K562 (cell line): ENCODE measurements at regions of chr1 and their contacts with region 1.

Region 1: GRCh38 chr1:161177112-161177935 is at the start of gene B4GALT3:
- DNase-seq: peak; percentile 91 to 98 (median 98)
- ATAC-seq: peak; percentile 94
- H3K4me3 ChIP-seq: peak within 1 kb of the TSS; percentile 90
- H3K27ac ChIP-seq: peak within 1 kb of the TSS; percentile 96
- H3K4me1 ChIP-seq: peaks cover 25 to 42% of the 10 kb centered on the region in 2 experiments; a peak in 4 of 5 replicates
- H3K27me3 ChIP-seq: no peaks in the 10 kb centered on the region
- CTCF ChIP-seq: peak; percentile 81 to 87 (median 82)
- EP300 ChIP-seq: peak; percentile 61
- POLR2A ChIP-seq: peak; percentile 95
- RAD21 ChIP-seq: peak; percentile 87 to 88
- polyA plus RNA-seq, gene B4GALT3: 46.1 to 103 TPM

Region 2: DNA sequence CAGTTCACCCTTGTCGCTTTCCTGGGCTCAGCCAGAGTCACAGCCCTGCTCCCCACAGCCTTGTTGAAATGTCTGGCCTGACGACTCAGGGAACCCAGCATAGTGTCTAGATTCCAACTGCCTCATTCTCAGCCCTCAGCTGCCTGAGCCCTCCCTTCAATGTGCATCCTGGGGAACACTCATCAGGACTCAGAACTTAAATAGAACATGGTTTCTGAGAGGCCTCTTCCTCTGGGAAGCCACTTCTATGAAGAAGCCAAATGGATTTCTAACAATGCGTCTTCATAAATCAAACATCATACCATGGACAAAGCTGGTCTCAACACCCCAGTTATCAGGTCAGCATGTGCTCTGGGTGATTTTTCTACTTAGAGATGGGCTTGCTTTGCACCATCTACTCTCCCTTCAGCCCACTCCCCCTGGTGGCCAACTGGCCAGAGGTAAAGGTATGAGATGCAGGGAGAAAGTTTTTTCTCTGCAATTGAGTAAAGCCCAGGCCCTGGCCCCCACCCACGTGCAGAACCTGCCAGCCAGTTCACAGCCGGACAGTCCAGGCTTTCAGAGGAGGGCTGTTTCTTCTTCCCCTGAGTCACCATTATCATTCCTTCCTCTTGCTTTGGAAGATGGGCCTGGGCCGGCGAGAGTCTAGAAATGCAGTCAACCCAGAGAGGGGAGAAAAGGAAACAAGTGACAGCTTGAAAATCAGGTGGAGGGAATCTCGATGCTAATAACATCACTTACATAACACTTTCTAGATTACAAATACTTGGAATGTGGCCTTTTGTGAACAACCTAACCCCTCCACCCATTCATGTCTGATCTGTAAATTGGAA is 346.8 kb before region 1 on chr1:
- CTCF ChIA-PET with region 1: no interaction called
- POLR2A ChIA-PET with region 1: no interaction called
- in situ Hi-C with region 1: no loop called
- intact Hi-C with region 1: loop called (anchors 10 kb)
- DNase-seq: peak; percentile 45 to 72 (median 62)
- ATAC-seq: peak; percentile 95
- H3K4me3 ChIP-seq: no peak overlapping the region
- H3K27ac ChIP-seq: no peak overlapping the region
- H3K4me1 ChIP-seq: no peaks in the 10 kb centered on the region
- H3K27me3 ChIP-seq: peaks cover 0 to 12% of the 10 kb centered on the region in 2 experiments; a peak in 2 of 5 replicates
- CTCF ChIP-seq: peak; percentile 76 to 81 (median 81)
- EP300 ChIP-seq: no peak
- POLR2A ChIP-seq: no peak
- RAD21 ChIP-seq: peak; percentile 73 to 74

Region 3: GRCh38 chr1:161071886-161072371 is 105.4 kb before region 1 on chr1:
- CTCF ChIA-PET with region 1: interaction called, 4 read pairs
- POLR2A ChIA-PET with region 1: no interaction called
- in situ Hi-C with region 1: no loop called
- intact Hi-C with region 1: loop called (anchors 1 kb)
- DNase-seq: peak; percentile 77 to 80 (median 78)
- ATAC-seq: peak; percentile 90
- H3K4me3 ChIP-seq: no peak overlapping the region
- H3K27ac ChIP-seq: no peak overlapping the region
- H3K4me1 ChIP-seq: peaks cover 22 to 23% of the 10 kb centered on the region in 2 experiments
- H3K27me3 ChIP-seq: no peaks in the 10 kb centered on the region
- CTCF ChIP-seq: peak; percentile 86 to 91 (median 90)
- EP300 ChIP-seq: no peak
- POLR2A ChIP-seq: no peak
- RAD21 ChIP-seq: peak; percentile 75 to 88

Region 4: DNA sequence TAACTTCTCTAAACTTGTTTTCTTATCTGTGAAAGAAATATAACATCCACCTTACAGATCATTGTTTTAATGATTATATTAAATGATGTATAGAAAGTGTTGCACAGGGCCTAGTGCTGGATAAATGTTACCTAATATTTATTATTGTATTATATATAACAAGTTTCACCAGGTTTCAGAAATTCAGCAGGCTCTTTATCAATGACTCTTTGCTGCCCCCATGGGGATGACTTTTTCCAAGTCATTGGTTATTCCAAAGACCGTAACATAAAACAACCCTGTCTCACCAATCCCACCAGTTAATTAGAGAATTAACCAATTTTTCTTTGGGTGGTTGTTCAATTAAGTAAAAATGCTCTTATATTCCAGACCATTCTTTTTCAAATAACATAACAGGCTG is 37.6 kb before region 1 on chr1:
- CTCF ChIA-PET with region 1: no interaction called
- POLR2A ChIA-PET with region 1: interaction called, 4 read pairs
- in situ Hi-C with region 1: no loop called
- intact Hi-C with region 1: loop called (anchors 1 kb)
- DNase-seq: peak in 3 of 4 experiments; percentile 43 to 68 (median 60)
- ATAC-seq: peak; percentile 88
- H3K4me3 ChIP-seq: no peak overlapping the region
- H3K27ac ChIP-seq: no peak overlapping the region
- H3K4me1 ChIP-seq: peaks cover 0 to 4% of the 10 kb centered on the region in 2 experiments; a peak in 3 of 5 replicates
- H3K27me3 ChIP-seq: no peaks in the 10 kb centered on the region
- CTCF ChIP-seq: peak; percentile 55 to 85 (median 59); a peak in 5 of 6 replicates
- EP300 ChIP-seq: no peak
- POLR2A ChIP-seq: no peak
- RAD21 ChIP-seq: peak; percentile 65 to 75

Region 5: GRCh38 chr1:161159087-161159912 is 18.0 kb before region 1 on chr1 and contains the start of gene USP21:
- CTCF ChIA-PET with region 1: no interaction called
- POLR2A ChIA-PET with region 1: interaction called, 4 read pairs
- in situ Hi-C with region 1: no loop called
- intact Hi-C with region 1: loop called (anchors 2 kb)
- DNase-seq: peak; percentile 94 to 96 (median 94)
- ATAC-seq: peak; percentile 91
- H3K4me3 ChIP-seq: peak within 1 kb of the TSS; percentile 75
- H3K27ac ChIP-seq: peak within 1 kb of the TSS; percentile 72
- H3K4me1 ChIP-seq: peaks cover 50 to 62% of the 10 kb centered on the region in 2 experiments
- H3K27me3 ChIP-seq: no peaks in the 10 kb centered on the region
- CTCF ChIP-seq: peak; percentile 25 to 62 (median 29); a peak in 5 of 6 replicates
- EP300 ChIP-seq: 0 out of 2 replicates have a peak, but pooled peaks have one; percentile 17
- POLR2A ChIP-seq: peak; percentile 80
- RAD21 ChIP-seq: no peak
- polyA plus RNA-seq, gene USP21: 14.7 to 14.8 TPM

Region 6: GRCh38 chr1:161165742-161166668 is 11.3 kb before region 1 on chr1 and contains the start of gene PPOX:
- CTCF ChIA-PET with region 1: no interaction called
- POLR2A ChIA-PET with region 1: interaction called, 33 read pairs
- in situ Hi-C with region 1: no loop called
- intact Hi-C with region 1: loop called (anchors 1 kb)
- DNase-seq: peak; percentile 91 to 99 (median 93)
- ATAC-seq: peak; percentile 93
- H3K4me3 ChIP-seq: peak within 1 kb of the TSS; percentile 55
- H3K27ac ChIP-seq: peak within 1 kb of the TSS; percentile 83
- H3K4me1 ChIP-seq: peaks cover 54 to 70% of the 10 kb centered on the region in 2 experiments
- H3K27me3 ChIP-seq: no peaks in the 10 kb centered on the region
- CTCF ChIP-seq: peak; percentile 69 to 85 (median 72)
- EP300 ChIP-seq: peak; percentile 98
- POLR2A ChIP-seq: peak; percentile 96
- RAD21 ChIP-seq: peak in 1 of 2 experiments; percentile 22; a peak in 2 of 4 replicates
- polyA plus RNA-seq, gene PPOX: 17.0 to 31.1 TPM

Region 7: DNA sequence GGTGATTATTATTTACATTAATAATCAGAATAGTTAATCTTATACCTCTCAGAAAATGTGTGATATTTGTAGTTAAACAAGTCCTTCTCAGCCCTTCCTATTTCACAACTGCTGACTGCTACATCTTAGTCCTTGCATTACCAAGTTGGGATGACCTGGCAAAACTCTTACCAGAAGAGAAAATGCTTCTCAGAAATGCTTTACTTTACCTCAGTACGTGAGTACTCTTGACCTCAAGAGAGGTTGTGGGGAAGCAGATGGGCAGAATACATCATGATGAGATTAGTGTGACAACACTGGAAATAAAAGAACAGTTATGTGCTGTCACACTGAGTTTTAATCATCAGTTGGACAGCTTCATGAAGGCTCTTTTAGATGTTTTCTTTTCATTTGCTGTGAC is 174.2 kb after region 1 on chr1:
- CTCF ChIA-PET with region 1: no interaction called
- POLR2A ChIA-PET with region 1: no interaction called
- in situ Hi-C with region 1: no loop called
- intact Hi-C with region 1: no loop called
- DNase-seq: peak in 1 of 4 experiments; percentile 11
- ATAC-seq: no peak
- H3K4me3 ChIP-seq: no peak overlapping the region
- H3K27ac ChIP-seq: peak overlapping the region; percentile 15; the same call in 2 of the 3 replicates
- H3K4me1 ChIP-seq: no peaks in the 10 kb centered on the region; a peak in 1 of 5 replicates
- H3K27me3 ChIP-seq: no peaks in the 10 kb centered on the region
- CTCF ChIP-seq: no peak
- EP300 ChIP-seq: no peak
- POLR2A ChIP-seq: no peak
- RAD21 ChIP-seq: no peak